Heart right ventricle (tissue), 16 donors: ENCODE measurements at regions of chr5 and their contacts with region 1.

Region 1: DNA sequence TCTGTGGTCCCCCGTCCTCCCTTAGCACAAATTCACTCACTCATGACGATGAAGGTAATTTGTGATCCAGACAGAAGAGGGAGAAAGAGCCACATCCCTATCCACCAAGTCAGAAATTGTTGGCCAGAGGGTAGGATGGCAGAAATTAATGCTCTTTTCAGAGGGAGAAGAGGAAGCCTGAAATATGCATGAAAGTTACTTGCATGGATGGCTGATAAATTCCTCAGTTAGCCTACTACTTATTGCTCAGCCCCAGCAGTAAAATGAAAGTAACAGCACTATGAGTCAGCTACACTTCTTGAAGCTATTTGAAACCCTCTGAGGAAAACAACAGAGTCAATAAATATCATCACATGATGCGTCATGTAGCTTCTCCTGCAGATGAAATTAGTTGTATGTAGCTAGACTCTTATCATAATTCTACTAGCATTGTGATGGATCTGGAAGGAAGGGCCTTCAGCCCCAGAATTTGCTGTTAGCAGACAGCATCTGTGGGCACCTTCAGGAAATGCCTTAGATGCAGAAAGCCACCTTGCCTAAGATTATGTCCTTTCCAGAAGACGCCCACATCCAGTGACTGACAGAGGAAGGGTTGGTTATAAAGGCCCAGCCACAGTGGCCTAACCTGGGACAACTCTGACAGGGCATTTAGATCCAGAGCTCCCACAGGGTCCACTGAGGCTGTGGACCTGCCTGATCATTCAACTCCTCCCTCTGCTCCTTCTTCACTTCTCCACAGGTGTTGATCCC is 81.2 kb upstream of the CCDC112 start:
- DNase-seq: peak in 1 of 2 donors; percentile 24
- ATAC-seq: peak in 7 of 8 donors; percentile 36 to 84 (median 68)
- H3K4me3 ChIP-seq: peak overlapping the region in 1 of 10 donors; percentile 5
- H3K27ac ChIP-seq: peak overlapping the region in 7 of 10 donors; percentile 34 to 73 (median 52)
- H3K4me1 ChIP-seq: peaks cover 0 to 29% (median 14%) of the 10 kb centered on the region in 9 donors
- H3K27me3 ChIP-seq: no peaks in the 10 kb centered on the region
- CTCF ChIP-seq: peak; percentile 29 to 62 (median 49)

Region 2: GRCh38 chr5:115309751-115310370 is 67.8 kb before region 1 on chr5:
- intact Hi-C with region 1: loop called in 3 of 10 experiments (anchors 5 to 10 kb)
- DNase-seq: no peak
- ATAC-seq: peak in 2 of 8 donors; percentile 51 to 55
- H3K4me3 ChIP-seq: no peak overlapping the region
- H3K27ac ChIP-seq: no peak overlapping the region
- H3K4me1 ChIP-seq: no peaks in the 10 kb centered on the region
- H3K27me3 ChIP-seq: peaks cover 0 to 12% (median 0%) of the 10 kb centered on the region in 7 donors
- CTCF ChIP-seq: peak; percentile 55 to 87 (median 77)

Region 3: GRCh38 chr5:115415143-115415491 is 37.5 kb after region 1 on chr5:
- intact Hi-C with region 1: loop called in 4 of 10 experiments (anchors 1 to 5 kb)
- DNase-seq: peak in 1 of 2 donors; percentile 36
- ATAC-seq: peak in 7 of 8 donors; percentile 29 to 88 (median 82)
- H3K4me3 ChIP-seq: no peak overlapping the region
- H3K27ac ChIP-seq: peak overlapping the region in 2 of 10 donors; percentile 23 to 46
- H3K4me1 ChIP-seq: peaks cover 5 to 51% (median 24%) of the 10 kb centered on the region in 9 donors
- H3K27me3 ChIP-seq: no peaks in the 10 kb centered on the region
- CTCF ChIP-seq: no peak

Region 4: DNA sequence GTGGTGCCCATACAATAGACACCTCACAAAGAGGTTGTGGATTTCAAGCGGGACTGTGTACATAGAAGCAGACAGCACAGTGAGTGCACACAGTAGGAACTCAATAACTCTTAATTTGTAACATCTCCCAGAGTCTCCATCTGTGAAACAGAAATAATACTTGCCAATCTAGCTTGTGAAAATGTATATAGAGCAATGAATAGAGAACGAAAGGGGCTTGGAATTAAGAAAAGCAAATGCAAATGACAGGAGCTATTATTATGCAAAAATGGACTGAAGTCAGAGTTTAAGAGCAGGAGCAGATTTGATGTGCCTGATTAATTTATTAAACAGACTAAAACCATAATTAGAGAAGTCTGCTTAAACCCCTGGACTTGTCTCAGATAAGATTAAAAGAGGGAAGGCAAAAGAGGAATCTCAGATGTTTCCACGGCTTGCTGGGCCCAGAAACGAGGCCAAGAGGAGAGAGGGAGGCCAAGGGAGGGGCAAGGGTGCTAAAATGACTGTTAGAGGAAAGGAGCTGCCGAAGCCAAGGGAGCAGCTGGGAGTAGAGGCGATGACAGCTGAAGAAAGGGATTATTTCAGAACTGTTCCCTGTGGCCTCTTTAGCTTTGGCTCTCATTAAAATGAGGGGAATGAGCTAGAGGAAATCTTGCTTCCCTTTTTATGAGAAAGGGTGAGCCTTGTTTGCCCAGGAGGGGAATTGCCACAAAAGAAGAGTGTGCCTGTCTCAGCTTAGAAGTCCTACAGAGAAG is 94.8 kb after region 1 on chr5:
- intact Hi-C with region 1: loop called in 1 of 10 experiments (anchors 5 kb)
- DNase-seq: peak; percentile 32 to 54
- ATAC-seq: peak; percentile 72 to 85 (median 78)
- H3K4me3 ChIP-seq: no peak overlapping the region
- H3K27ac ChIP-seq: peak overlapping the region in 6 of 10 donors; percentile 17 to 47 (median 30)
- H3K4me1 ChIP-seq: peaks cover 0 to 26% (median 20%) of the 10 kb centered on the region in 9 donors
- H3K27me3 ChIP-seq: no peaks in the 10 kb centered on the region
- CTCF ChIP-seq: no peak

Region 5: DNA sequence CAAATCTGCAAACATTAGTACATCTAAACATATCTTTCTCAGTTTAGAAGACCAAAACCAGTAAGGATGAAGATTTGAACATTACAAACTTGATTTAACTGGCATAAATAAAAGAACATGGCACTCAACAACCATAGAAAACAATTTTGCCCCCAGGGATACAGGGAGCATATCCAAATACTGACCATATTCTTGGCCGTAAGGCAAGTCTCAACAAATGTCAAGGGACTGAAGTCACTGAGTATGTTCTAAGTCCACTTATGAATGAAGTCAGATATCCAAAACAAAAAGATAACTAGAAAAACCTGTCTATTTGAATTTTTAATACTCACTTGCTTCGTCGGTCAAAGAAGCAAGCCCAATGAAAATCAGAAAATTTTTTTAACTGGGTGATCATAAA is 152.8 kb after region 1 on chr5:
- intact Hi-C with region 1: no loop called
- DNase-seq: no peak
- ATAC-seq: peak in 6 of 8 donors; percentile 48 to 82 (median 62)
- H3K4me3 ChIP-seq: peak overlapping the region in 3 of 10 donors; percentile 5 to 9 (median 9)
- H3K27ac ChIP-seq: peak overlapping the region in 2 of 10 donors; percentile 6 to 37
- H3K4me1 ChIP-seq: peaks cover 0 to 100% (median 82%) of the 10 kb centered on the region in 9 donors
- H3K27me3 ChIP-seq: no peaks in the 10 kb centered on the region
- CTCF ChIP-seq: no peak

Region 6: DNA sequence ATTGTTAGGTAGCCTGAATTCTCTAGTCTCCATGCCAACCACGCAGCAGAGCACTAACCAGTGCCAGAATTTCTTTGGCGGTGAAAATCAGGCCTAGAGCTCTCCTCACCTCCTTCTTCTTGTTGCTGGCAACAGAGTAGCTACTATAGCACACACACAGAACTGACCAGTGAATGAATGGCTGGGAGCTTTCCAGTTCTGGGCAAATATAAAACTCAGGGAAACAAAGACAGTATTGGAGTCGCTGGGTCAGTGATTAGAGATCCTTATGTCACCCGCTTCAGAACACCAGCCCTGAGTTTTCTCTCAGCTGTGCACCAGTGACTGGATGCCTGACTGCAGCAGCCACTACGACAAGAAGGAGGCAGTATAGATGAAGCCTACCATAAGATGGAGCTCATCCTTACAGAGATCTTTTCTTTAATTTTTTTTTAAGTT is 193.8 kb after region 1 on chr5:
- intact Hi-C with region 1: loop called in 9 of 10 experiments (anchors 1 to 10 kb)
- DNase-seq: peak in 1 of 2 donors; percentile 47
- ATAC-seq: peak; percentile 59 to 91 (median 76)
- H3K4me3 ChIP-seq: no peak overlapping the region
- H3K27ac ChIP-seq: peak overlapping the region in 3 of 10 donors; percentile 0 to 24 (median 19)
- H3K4me1 ChIP-seq: peaks cover 0 to 28% (median 10%) of the 10 kb centered on the region in 9 donors
- H3K27me3 ChIP-seq: no peaks in the 10 kb centered on the region
- CTCF ChIP-seq: peak in 3 of 9 donors; percentile 14 to 27 (median 26)

Region 7: DNA sequence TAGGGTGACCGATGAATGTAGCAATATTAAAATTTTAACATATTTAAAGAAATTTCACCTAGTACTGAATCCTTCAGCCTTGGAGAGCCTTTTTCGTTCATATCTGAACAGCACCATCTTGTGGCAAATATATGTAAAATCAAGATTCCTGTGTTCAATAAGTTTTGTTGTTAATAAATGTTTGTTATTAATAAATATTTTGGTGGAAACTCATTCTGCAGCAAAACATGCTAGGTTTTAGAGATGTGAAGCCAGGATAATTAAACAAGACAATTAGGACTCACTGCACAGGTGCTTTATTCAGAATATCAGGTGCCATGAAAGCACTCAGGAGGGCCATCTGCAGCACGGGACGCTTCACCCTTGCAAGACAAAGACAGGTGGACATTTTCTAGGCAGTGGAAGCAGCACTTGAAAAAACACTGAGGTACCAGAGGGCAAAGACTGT is 209.0 kb after region 1 on chr5:
- intact Hi-C with region 1: loop called in 4 of 10 experiments (anchors 5 to 10 kb)
- DNase-seq: no peak
- ATAC-seq: peak in 3 of 8 donors; percentile 31 to 52 (median 43)
- H3K4me3 ChIP-seq: no peak overlapping the region
- H3K27ac ChIP-seq: no peak overlapping the region
- H3K4me1 ChIP-seq: peaks cover 0 to 33% (median 10%) of the 10 kb centered on the region in 9 donors
- H3K27me3 ChIP-seq: no peaks in the 10 kb centered on the region
- CTCF ChIP-seq: peak; percentile 46 to 76 (median 64)

Region 8: DNA sequence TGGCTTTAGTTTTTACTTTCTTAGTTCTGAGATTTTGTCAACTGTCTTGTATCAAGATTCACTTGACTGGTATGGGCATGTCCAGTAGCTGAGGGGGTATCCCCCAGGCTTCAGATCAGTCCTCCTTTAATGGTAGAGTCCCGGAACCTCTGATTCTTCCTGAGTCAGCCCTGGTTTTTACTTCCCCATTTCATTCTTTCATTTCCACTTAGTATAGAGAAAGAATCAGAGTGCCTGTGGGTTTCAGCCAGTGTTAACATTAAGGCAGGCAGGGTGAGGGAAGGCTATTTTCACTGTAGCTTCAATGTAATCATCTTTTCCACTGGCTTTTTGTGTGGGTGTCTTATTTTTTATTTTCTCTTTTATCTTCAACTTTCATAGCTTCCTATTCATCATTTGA is 698.9 kb after region 1 on chr5:
- intact Hi-C with region 1: no loop called
- DNase-seq: no peak
- ATAC-seq: peak in 2 of 8 donors; percentile 31 to 71
- H3K4me3 ChIP-seq: no peak overlapping the region
- H3K27ac ChIP-seq: no peak overlapping the region
- H3K4me1 ChIP-seq: peaks cover 0 to 6% (median 0%) of the 10 kb centered on the region in 9 donors
- H3K27me3 ChIP-seq: no peaks in the 10 kb centered on the region
- CTCF ChIP-seq: no peak